ENCODE measurements at regions of chr10 and their contacts with region 1.

Region 1: DNA sequence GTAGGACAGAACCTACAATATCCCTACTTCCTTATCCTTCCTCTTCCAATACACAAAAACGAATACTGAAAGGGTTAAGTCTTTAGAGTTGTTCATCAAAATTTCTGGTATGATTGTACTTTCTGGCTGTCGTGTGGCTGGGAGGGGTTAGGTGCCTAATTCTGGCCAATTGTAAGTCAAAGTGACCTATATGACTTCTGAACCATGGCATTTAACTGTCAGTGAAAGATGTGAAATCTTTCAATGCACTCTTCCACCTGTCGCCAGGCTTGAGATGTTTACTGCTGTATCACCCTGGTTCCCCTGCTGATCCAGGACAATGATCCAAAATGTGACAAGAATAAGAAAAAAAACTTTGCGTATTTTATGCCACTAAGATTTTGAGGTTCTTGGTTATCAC is 20.8 kb downstream of the EPC1 start:
- DNase-seq: no peak
- H3K4me3 ChIP-seq: no peak overlapping the region
- CTCF ChIP-seq: no peak

Region 2: GRCh38 chr10:31819391-31819820 is 506.7 kb before region 1 on chr10:
- in situ Hi-C with region 1: no loop called
- DNase-seq: no peak
- H3K4me3 ChIP-seq: no peak overlapping the region
- CTCF ChIP-seq: no peak

Region 3: DNA sequence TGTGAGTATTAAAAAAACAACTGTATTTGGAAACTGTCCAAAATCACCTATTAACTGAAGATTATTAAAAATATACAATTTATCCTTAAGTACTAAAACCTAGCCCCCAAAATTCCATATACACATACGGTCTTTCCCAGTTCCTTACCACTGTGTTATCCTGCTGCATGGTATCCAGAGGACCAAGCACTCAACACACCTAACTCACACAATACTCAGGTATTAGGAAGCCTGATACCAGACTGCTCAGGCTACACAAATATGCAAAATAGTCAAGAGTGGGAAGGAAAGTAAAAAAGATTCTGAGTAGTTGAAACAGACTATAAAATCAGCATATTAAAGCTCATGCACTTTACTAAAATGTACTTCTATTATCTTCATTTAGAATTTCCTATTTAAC is 46.3 kb before region 1 on chr10:
- in situ Hi-C with region 1: loop called (anchors 5 kb)
- DNase-seq: no peak
- H3K4me3 ChIP-seq: no peak overlapping the region
- CTCF ChIP-seq: no peak

Region 4: GRCh38 chr10:32372000-32372875 is 46.1 kb after region 1 on chr10:
- in situ Hi-C with region 1: loop called (anchors 5 kb)
- DNase-seq: no peak
- H3K4me3 ChIP-seq: no peak overlapping the region
- CTCF ChIP-seq: no peak